ENCODE measurements at regions of chr1 and their contacts with region 1.

Region 1: GRCh38 chr1:91795591-91796389 is 90.2 kb downstream of the TGFBR3 start:
- DNase-seq: no peak
- ATAC-seq: peak in 1 of 4 donors; percentile 12
- H3K4me3 ChIP-seq: no peak overlapping the region
- H3K27ac ChIP-seq: peak overlapping the region; percentile 51
- H3K4me1 ChIP-seq: peaks cover 49% of the 10 kb centered on the region
- H3K27me3 ChIP-seq: no peaks in the 10 kb centered on the region
- CTCF ChIP-seq: no peak

Region 2: GRCh38 chr1:91754348-91754747 is 41.4 kb before region 1 on chr1:
- intact Hi-C with region 1: loop called in 1 of 2 experiments (anchors 5 kb)
- DNase-seq: no peak
- ATAC-seq: no peak
- H3K4me3 ChIP-seq: no peak overlapping the region
- H3K27ac ChIP-seq: peak overlapping the region; percentile 56
- H3K4me1 ChIP-seq: peaks cover 27% of the 10 kb centered on the region
- H3K27me3 ChIP-seq: no peaks in the 10 kb centered on the region
- CTCF ChIP-seq: no peak

Region 3: DNA sequence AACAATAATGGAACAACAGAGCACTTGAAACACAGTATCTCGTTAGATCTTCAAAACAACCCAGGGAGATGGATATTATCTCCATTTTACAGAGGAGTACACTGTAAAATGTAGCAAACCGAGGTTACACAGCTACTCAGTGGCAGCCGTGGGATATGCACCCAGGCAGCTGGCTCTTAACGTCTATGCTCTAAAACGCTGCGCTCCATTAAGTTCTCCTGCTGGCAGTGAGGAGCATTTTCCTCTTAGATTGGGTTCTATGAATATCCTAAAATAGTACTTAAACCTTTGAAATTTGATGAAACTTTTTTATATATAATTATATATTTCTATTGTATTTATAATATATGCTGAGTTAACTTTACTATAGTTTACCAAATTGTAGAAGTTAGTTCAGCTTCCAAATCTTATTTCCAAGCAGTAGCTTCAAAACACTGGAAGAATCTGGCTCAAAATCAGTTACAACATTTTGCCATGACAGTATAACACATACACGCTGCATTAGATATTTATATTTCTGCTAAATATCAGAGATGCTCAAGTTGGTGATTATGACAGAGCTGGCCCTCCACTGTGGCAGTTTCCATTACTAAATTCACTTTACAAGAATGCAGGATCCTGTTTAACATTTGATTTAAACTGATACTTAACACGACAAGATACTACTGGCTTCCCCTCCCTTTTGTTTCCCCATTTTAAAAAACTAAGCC is 40.7 kb after region 1 on chr1:
- intact Hi-C with region 1: loop called in 1 of 2 experiments (anchors 5 kb)
- DNase-seq: no peak
- ATAC-seq: peak in 2 of 4 donors; percentile 61 to 69
- H3K4me3 ChIP-seq: no peak overlapping the region
- H3K27ac ChIP-seq: no peak overlapping the region
- H3K4me1 ChIP-seq: peaks cover 14% of the 10 kb centered on the region
- H3K27me3 ChIP-seq: no peaks in the 10 kb centered on the region
- CTCF ChIP-seq: no peak